Ovary (tissue), 10 donors: ENCODE measurements at regions of chr1 and their contacts with region 1.

Region 1: GRCh38 chr1:156394835-156395461 is 25.9 kb downstream of the RHBG start:
- DNase-seq: no peak
- H3K4me3 ChIP-seq: no peak overlapping the region
- H3K27ac ChIP-seq: no peak overlapping the region
- H3K4me1 ChIP-seq: no peaks in the 10 kb centered on the region
- H3K27me3 ChIP-seq: no peaks in the 10 kb centered on the region
- CTCF ChIP-seq: no peak
- EP300 ChIP-seq: no peak
- POLR2A ChIP-seq: no peak

Region 2: GRCh38 chr1:156434989-156435544 is 40.1 kb after region 1 on chr1:
- intact Hi-C with region 1: loop called in 1 of 4 experiments (anchors 5 kb)
- DNase-seq: no peak
- H3K4me3 ChIP-seq: no peak overlapping the region
- H3K27ac ChIP-seq: no peak overlapping the region
- H3K4me1 ChIP-seq: peaks cover 4% of the 10 kb centered on the region
- H3K27me3 ChIP-seq: no peaks in the 10 kb centered on the region
- CTCF ChIP-seq: no peak
- EP300 ChIP-seq: no peak
- POLR2A ChIP-seq: no peak